Caco-2 (cell line): ENCODE measurements at regions of chr22 and their contacts with region 1.

Region 1: DNA sequence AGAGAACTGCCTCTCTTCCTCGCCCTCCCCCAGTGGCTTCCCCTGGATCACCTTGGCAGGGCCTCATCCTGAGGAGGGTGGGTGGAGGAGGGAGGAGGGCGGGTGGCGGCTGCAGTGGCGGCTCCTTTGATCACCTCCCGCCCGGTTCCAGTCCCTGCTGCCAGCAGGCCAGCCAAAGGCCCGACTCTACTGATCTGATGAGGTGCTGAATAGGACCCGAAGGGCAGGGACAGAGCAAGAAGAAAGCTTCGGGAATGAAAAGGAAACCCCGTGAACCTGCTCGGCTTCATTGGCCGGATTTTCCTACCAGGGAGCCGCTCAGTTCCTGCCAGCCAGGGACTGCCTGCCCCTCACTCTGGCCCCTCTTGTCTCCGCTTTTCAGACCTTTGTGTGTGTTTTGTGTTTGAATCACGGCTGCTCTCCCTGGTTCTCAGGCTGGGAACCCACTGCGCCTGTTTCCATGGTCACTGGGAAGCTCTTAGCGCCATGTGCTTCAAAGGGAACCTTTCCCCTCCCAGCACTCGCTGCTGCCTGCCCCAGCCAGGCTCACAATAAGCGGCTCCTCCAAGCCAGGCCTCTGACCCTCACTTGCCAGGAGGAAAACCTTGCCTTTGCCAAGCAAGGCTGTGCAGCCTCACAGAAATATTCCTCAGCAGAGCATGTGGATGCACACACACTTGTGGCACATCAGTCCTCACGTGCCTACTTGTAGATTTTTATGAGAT is 56.8 kb downstream of the C22orf31 start:
- DNase-seq: peak; percentile 67 to 76
- H3K4me3 ChIP-seq: no peak overlapping the region
- H3K4me3 Mint-ChIP-seq: peak overlapping the region; percentile 54
- H3K27ac Mint-ChIP-seq: peak overlapping the region; percentile 87
- H3K4me1 ChIP-seq: peaks cover 70% of the 10 kb centered on the region
- H3K4me1 Mint-ChIP-seq: peaks cover 45% of the 10 kb centered on the region
- H3K27me3 ChIP-seq: no peaks in the 10 kb centered on the region
- H3K27me3 Mint-ChIP-seq: no peaks in the 10 kb centered on the region
- CTCF ChIP-seq: no peak

Region 2: GRCh38 chr22:28955817-28956216 is 49.0 kb before region 1 on chr22:
- CTCF ChIA-PET with region 1: no interaction called
- POLR2A ChIA-PET with region 1: no interaction called
- intact Hi-C with region 1: no loop called
- DNase-seq: no peak
- H3K4me3 ChIP-seq: no peak overlapping the region
- H3K4me3 Mint-ChIP-seq: no peak overlapping the region
- H3K27ac Mint-ChIP-seq: peak overlapping the region; percentile 37
- H3K4me1 ChIP-seq: peaks cover 43% of the 10 kb centered on the region
- H3K4me1 Mint-ChIP-seq: peaks cover 41% of the 10 kb centered on the region
- H3K27me3 ChIP-seq: no peaks in the 10 kb centered on the region
- H3K27me3 Mint-ChIP-seq: no peaks in the 10 kb centered on the region
- CTCF ChIP-seq: no peak

Region 3: DNA sequence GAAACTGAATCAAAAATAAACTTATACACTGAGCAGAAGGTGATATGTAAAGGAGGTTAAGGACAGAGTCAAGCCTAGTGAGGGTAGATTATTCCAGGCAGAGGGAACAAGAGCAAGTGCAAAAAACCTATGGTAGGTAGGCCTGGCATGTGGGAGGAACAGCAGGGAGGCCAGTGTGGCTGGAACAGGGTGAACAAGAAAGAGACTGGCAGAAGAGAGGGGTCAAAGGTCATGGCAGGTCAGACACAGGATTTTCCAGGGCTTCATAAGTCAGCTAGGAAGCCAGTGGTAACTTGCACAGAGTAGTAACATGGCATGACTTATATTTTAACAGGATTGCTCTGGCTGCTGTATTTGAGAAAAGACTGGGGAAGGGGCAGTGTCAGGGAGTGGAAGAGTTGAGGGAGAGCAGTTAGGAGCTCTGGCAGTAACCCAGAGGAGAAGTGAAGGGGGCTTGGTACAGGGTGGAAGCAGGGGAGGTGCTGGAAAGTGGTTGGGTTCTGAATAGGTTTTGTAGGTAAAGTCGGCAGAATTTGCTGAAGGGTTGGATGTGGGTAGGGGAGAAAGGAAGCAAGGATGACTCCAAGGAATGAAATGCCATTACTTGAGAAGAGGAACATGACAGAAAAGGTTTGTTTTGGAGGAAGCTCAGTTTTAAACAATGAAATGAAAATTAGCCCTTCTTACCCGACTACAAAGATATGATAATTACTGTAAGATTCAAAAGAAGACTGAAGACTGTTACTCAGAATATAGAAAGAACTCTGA is 35.2 kb before region 1 on chr22:
- CTCF ChIA-PET with region 1: no interaction called
- POLR2A ChIA-PET with region 1: no interaction called
- intact Hi-C with region 1: no loop called
- DNase-seq: no peak
- H3K4me3 ChIP-seq: no peak overlapping the region
- H3K4me3 Mint-ChIP-seq: no peak overlapping the region
- H3K27ac Mint-ChIP-seq: peak overlapping the region; percentile 46
- H3K4me1 ChIP-seq: peaks cover 10% of the 10 kb centered on the region
- H3K4me1 Mint-ChIP-seq: peaks cover 18% of the 10 kb centered on the region
- H3K27me3 ChIP-seq: no peaks in the 10 kb centered on the region
- H3K27me3 Mint-ChIP-seq: no peaks in the 10 kb centered on the region
- CTCF ChIP-seq: no peak

Region 4: DNA sequence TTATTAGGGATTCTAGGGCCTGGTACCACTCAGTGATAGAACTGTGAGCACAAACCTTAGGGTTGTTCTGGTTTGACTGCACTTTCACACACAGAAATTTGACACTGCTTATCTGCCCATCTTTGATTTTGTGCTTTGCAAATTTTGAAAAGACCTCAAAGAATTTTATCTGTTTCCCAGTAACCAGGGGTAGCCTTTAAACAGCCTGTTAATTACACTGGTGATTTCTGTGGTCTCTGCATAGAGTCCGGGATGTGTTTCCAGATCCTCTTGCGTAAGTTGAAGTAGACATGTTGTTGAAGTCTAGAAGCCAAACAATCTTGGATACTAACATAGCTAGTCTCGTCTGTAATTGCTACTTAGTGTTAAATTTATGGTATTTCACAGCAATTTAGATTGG is 18.4 kb before region 1 on chr22:
- CTCF ChIA-PET with region 1: interaction called, 4 read pairs
- POLR2A ChIA-PET with region 1: no interaction called
- intact Hi-C with region 1: loop called (anchors 1 kb)
- DNase-seq: peak; percentile 37 to 44
- H3K4me3 ChIP-seq: no peak overlapping the region
- H3K4me3 Mint-ChIP-seq: peak overlapping the region; percentile 43
- H3K27ac Mint-ChIP-seq: peak overlapping the region; percentile 29
- H3K4me1 ChIP-seq: peaks cover 64% of the 10 kb centered on the region
- H3K4me1 Mint-ChIP-seq: peaks cover 57% of the 10 kb centered on the region
- H3K27me3 ChIP-seq: no peaks in the 10 kb centered on the region
- H3K27me3 Mint-ChIP-seq: no peaks in the 10 kb centered on the region
- CTCF ChIP-seq: no peak

Region 5: GRCh38 chr22:29031227-29032011 is 26.6 kb after region 1 on chr22:
- CTCF ChIA-PET with region 1: no interaction called
- POLR2A ChIA-PET with region 1: no interaction called
- intact Hi-C with region 1: no loop called
- DNase-seq: no peak
- H3K4me3 ChIP-seq: no peak overlapping the region
- H3K4me3 Mint-ChIP-seq: no peak overlapping the region
- H3K27ac Mint-ChIP-seq: peak overlapping the region; percentile 32
- H3K4me1 ChIP-seq: peaks cover 28% of the 10 kb centered on the region
- H3K4me1 Mint-ChIP-seq: peaks cover 22% of the 10 kb centered on the region
- H3K27me3 ChIP-seq: no peaks in the 10 kb centered on the region; the same call in 1 of the 2 replicates
- H3K27me3 Mint-ChIP-seq: no peaks in the 10 kb centered on the region
- CTCF ChIP-seq: no peak

Region 6: DNA sequence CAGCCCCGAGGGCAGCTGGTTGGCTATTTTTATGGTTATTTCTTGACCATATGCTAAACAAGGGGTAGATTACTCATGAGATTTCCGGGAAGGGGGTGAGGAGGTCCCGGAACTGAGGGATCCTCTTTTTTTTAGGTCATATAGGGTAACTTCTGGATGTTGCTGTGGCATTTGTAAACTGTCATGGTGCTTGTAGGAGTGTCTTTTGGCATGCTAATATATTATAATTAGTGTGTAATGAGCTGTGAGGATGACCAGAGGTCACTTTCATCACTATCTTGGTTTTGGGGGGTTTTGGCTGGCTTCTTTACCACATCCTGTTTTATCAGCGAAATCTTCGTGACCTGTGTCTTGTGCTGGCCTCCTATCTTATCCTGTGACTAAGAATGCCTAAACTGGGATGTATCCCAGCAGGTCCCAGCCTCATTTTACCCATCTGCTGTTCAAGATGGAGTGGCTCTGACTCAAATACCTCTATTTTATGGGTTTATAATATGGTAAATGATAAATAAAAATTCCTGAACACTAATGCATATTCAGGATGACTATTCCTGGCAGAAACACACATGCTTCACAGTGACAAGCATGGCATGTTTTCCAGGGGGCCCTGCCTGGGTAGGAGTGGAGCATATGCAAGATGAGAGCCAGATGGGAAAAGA is 79.3 kb after region 1 on chr22:
- CTCF ChIA-PET with region 1: no interaction called
- POLR2A ChIA-PET with region 1: no interaction called
- intact Hi-C with region 1: no loop called
- DNase-seq: no peak
- H3K4me3 ChIP-seq: no peak overlapping the region
- H3K4me3 Mint-ChIP-seq: no peak overlapping the region
- H3K27ac Mint-ChIP-seq: no peak overlapping the region
- H3K4me1 ChIP-seq: peaks cover 5% of the 10 kb centered on the region; the same call in 1 of the 2 replicates
- H3K4me1 Mint-ChIP-seq: peaks cover 10% of the 10 kb centered on the region
- H3K27me3 ChIP-seq: no peaks in the 10 kb centered on the region
- H3K27me3 Mint-ChIP-seq: no peaks in the 10 kb centered on the region
- CTCF ChIP-seq: no peak